AG04450 (cell line): ENCODE measurements at regions of chr2 and their contacts with region 1.

Region 1: DNA sequence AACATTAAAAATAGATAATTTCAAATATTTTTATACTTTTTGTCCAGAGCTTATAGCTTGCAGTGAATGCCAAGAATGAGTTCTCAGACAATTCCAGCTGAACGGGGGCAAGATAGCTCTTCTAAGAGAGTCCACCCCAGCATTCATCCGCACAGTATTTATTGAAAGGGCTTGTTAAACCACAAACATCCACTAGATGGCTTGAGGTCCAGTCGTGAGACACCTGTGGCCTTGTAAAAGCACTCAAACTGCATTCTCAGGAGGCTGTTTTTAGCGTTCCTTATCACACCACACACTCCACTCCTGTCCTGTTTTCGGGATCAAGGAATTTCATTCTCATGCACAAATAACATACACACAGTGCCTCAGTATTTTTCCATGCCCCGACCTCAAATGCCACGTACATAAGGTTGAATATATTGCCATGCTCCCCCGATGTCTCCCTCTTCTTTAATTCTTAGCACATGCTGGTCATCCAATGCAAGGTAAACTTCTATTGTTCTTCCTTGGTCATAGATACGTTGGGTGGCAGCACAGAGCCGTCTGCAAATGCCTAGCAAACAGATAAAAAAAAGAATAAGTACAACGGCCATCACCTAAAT is 47.4 kb downstream of the DNAJC10 start:
- DNase-seq: no peak
- H3K4me3 ChIP-seq: no peak overlapping the region
- H3K27ac ChIP-seq: no peak overlapping the region
- H3K27me3 ChIP-seq: no peaks in the 10 kb centered on the region
- CTCF ChIP-seq: peak; percentile 69

Region 2: GRCh38 chr2:182666674-182667314 is 96.6 kb before region 1 on chr2:
- CTCF ChIA-PET with region 1: no interaction called
- POLR2A ChIA-PET with region 1: no interaction called
- DNase-seq: no peak
- H3K4me3 ChIP-seq: no peak overlapping the region
- H3K27ac ChIP-seq: no peak overlapping the region
- H3K27me3 ChIP-seq: no peaks in the 10 kb centered on the region
- CTCF ChIP-seq: peak; percentile 64

Region 3: GRCh38 chr2:182715896-182716668 is 47.3 kb before region 1 on chr2 and contains the start of gene DNAJC10:
- CTCF ChIA-PET with region 1: no interaction called
- POLR2A ChIA-PET with region 1: no interaction called
- DNase-seq: peak; percentile 80
- H3K4me3 ChIP-seq: peak within 1 kb of the TSS; percentile 91
- H3K27ac ChIP-seq: peak within 1 kb of the TSS; percentile 86
- H3K27me3 ChIP-seq: no peaks in the 10 kb centered on the region
- CTCF ChIP-seq: no peak
- polyA plus RNA-seq, gene DNAJC10: 84.3 and 121 TPM in 2 replicates

Region 4: GRCh38 chr2:182779323-182779722 is 15.9 kb after region 1 on chr2:
- CTCF ChIA-PET with region 1: interaction called, 11 read pairs
- POLR2A ChIA-PET with region 1: no interaction called
- DNase-seq: no peak
- H3K4me3 ChIP-seq: no peak overlapping the region
- H3K27ac ChIP-seq: no peak overlapping the region
- H3K27me3 ChIP-seq: no peaks in the 10 kb centered on the region
- CTCF ChIP-seq: no peak

Region 5: DNA sequence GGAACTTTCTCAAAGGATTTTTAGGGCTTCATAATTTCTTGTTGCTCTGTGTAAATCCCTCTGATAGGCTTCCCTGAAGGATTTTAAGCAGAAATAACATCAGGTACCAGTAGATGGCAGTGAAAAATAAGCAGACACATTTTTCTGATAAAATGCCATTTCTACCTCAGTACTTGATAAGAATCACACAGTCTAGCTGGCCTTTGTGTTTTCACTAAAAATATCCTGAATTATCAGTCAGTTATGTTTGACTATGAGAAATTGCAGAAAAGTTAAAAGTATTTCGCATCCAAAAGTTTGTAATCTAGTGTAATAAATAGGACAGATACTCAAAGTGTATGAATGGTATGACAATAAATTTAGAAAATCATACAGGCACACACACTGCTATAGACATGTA is 21.4 kb after region 1 on chr2:
- CTCF ChIA-PET with region 1: interaction called, 11 read pairs
- POLR2A ChIA-PET with region 1: no interaction called
- DNase-seq: no peak
- H3K4me3 ChIP-seq: no peak overlapping the region
- H3K27ac ChIP-seq: no peak overlapping the region
- H3K27me3 ChIP-seq: no peaks in the 10 kb centered on the region
- CTCF ChIP-seq: peak; percentile 71

Region 6: DNA sequence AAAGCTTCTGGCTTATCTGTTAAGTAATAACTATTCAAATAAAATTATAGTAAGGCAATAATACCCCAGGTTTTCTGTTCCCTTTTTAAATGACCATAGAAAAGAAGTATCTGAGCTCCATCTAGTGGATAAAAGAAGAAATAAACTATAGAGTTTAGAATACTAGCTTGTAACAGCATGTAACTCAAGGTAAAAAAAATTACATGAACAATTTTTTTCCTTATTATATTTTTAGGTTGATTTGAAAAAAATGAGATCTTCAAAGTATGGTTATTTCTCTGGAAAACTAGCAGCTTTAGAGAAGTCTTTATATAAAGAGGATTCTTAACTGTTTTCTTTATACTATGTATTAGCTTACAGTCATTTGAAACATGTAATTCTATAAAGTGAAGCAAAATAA is 216.7 kb after region 1 on chr2:
- CTCF ChIA-PET with region 1: interaction called, 55 read pairs
- POLR2A ChIA-PET with region 1: no interaction called
- DNase-seq: no peak
- H3K4me3 ChIP-seq: no peak overlapping the region
- H3K27ac ChIP-seq: no peak overlapping the region
- H3K27me3 ChIP-seq: no peaks in the 10 kb centered on the region
- CTCF ChIP-seq: peak; percentile 48